Psoas muscle (tissue), 8 donors: ENCODE measurements at regions of chr10 and their contacts with region 1.

Region 1: DNA sequence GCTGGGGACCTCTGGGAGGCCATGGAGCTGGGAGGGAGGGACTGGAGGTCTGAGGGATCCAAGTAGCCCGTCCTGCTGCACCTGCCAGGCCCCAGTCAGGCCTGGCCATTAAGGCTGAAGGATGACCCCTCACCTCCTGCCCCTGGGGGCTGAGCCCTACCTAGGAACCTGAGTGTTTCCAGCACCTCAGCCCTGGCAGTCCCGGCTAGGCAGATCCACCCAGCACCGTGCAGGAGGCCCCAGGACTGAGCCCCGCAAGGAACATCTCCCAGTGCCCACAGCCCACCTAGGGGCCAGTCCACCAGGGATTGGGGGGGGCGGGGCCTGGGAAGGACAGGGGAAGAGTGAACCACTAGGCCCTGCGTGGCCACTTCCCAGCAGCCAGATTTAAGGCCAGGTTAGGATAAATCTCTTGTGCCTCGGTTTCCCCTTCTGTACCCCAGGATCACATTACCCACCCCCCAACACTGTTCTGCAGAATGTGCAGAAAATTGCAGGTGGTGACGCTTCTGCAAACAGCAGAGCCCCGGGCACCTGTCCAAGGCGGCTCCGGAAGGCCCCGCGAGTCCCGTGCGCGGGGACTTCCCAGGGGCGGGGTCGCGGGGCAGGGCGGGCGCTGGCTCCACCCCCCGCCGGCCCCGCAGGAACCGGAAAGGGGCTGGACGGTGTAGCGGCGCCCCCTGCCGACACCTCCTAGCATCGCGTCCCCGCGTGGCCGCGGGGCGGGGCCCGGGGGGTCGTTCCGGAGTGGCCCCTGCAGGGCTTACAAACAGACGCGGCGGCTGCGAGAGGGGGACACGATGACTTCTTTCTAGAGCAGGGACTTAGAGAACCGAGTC is 55.9 kb downstream of the PWWP2B start:
- DNase-seq: peak; percentile 82 to 91
- ATAC-seq: peak; percentile 78 to 84 (median 80)
- H3K4me3 ChIP-seq: peak overlapping the region; percentile 2
- H3K27ac ChIP-seq: peak overlapping the region; percentile 7
- H3K4me1 ChIP-seq: peaks cover 10% of the 10 kb centered on the region
- H3K27me3 ChIP-seq: peaks cover 0 to under 1% (median 0%) of the 10 kb centered on the region in 3 donors
- CTCF ChIP-seq: peak; percentile 97

Region 2: GRCh38 chr10:130635528-130635927 is 1817.3 kb before region 1 on chr10:
- intact Hi-C with region 1: no loop called
- DNase-seq: no peak
- ATAC-seq: no peak
- H3K4me3 ChIP-seq: no peak overlapping the region
- H3K27ac ChIP-seq: no peak overlapping the region
- H3K4me1 ChIP-seq: no peaks in the 10 kb centered on the region
- H3K27me3 ChIP-seq: peaks cover 3 to 8% (median 4%) of the 10 kb centered on the region in 3 donors
- CTCF ChIP-seq: no peak

Region 3: GRCh38 chr10:132297526-132297925 is 155.3 kb before region 1 on chr10:
- intact Hi-C with region 1: no loop called
- DNase-seq: no peak
- ATAC-seq: no peak
- H3K4me3 ChIP-seq: no peak overlapping the region
- H3K27ac ChIP-seq: no peak overlapping the region
- H3K4me1 ChIP-seq: no peaks in the 10 kb centered on the region
- H3K27me3 ChIP-seq: peaks cover 0 to 7% (median 2%) of the 10 kb centered on the region in 3 donors
- CTCF ChIP-seq: no peak

Region 4: DNA sequence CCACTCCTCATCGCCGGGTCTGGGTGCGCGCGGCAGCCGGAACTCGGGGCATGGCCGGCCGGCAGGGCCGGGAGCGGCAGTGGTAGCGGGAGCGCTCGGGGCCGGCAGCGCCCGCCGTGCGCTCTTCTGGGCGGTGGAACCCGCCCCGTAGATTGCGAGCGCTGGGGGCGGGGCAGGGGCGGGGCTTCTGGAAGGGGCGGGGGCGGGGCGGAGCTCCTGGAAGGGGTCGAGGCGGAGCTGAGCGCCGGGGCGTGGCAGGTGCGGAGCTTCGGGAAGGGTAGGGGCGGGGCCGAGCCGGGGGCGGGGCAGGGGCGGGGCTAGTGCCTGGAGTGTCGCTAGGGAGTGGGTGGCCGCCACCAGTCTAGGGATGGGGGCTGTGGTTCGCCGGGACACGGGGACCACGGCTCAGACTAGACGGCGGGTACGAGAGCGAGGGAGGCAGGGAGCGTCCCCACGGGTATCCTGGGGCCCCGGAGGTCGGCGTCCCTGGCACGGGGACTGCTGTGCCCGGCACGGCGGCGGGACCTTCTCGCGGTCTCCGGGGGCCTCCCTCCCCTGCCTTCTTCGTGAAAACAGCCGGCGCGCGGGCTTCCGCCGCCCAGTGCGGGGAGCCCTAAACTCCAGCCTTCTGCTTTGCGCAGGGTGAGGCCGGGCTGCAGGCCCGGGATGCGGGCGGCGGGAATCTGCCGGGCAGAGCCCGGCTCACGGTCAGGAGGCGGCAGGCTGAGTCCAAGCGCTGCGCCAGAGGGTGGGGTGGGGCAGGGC is 144.8 kb before region 1 on chr10 and contains the start of gene STK32C:
- intact Hi-C with region 1: no loop called
- DNase-seq: peak; percentile 93 to 96
- ATAC-seq: peak; percentile 95 to 98 (median 96)
- H3K4me3 ChIP-seq: peak within 1 kb of the TSS; percentile 82
- H3K27ac ChIP-seq: peak within 1 kb of the TSS; percentile 68
- H3K4me1 ChIP-seq: peaks cover 11% of the 10 kb centered on the region
- H3K27me3 ChIP-seq: peaks cover 0 to 24% (median 0%) of the 10 kb centered on the region in 3 donors
- CTCF ChIP-seq: no peak
- total RNA-seq, gene STK32C: 5.6 to 7.0 (median 6.1) TPM

Region 5: DNA sequence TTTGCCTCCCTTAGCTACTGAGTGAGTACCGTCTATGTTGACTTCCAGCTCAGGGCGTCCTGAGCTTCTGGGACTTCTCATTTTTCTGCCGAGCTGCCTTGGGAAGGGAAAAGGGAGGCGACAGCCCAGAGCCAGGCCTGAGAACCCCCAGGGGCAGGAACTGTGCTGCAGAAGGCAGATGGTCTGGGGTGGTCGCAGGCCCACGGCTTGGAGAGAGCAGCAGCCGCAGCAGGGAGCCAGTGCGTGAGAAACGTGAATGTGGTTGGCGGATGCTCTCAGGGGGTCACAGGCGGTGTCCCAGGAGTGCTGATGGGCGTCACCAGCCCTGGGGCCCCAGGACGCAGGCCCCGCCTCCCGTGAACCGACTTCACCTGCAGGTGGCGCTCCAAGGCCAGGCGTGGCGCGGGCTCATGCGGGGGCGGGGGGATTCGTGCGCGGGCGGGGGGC is 65.1 kb before region 1 on chr10:
- intact Hi-C with region 1: loop called (anchors 1 kb)
- DNase-seq: peak; percentile 75 to 85
- ATAC-seq: peak; percentile 52 to 86 (median 74)
- H3K4me3 ChIP-seq: no peak overlapping the region
- H3K27ac ChIP-seq: no peak overlapping the region
- H3K4me1 ChIP-seq: peaks cover 5% of the 10 kb centered on the region
- H3K27me3 ChIP-seq: no peaks in the 10 kb centered on the region
- CTCF ChIP-seq: peak; percentile 64